Heart right ventricle (tissue), 16 donors: ENCODE measurements at regions of chr15 and their contacts with region 1.

Region 1: DNA sequence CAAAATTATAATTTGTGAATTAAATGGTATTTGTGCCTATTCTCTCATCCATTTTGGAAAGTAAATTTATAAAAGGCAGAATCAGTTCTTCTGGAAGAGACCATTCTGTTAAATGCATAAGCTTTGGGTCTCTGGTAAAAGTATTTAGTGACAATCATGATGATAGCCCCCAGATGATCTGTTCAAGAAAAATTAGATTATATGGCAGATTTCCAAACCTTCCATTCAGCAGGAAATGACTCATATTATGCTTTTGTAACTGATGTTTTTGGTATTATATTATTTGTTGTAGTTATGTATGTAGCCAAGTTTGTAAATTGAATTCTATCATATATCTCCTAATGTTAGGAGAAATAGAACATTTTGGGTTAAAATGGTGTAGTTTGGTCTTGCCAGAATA is 340.8 kb upstream of the DPH6 start:
- DNase-seq: no peak
- ATAC-seq: no peak
- H3K4me3 ChIP-seq: no peak overlapping the region
- H3K27ac ChIP-seq: no peak overlapping the region
- H3K4me1 ChIP-seq: no peaks in the 10 kb centered on the region
- H3K27me3 ChIP-seq: no peaks in the 10 kb centered on the region
- CTCF ChIP-seq: no peak

Region 2: GRCh38 chr15:35944945-35945585 is 58.3 kb after region 1 on chr15:
- intact Hi-C with region 1: loop called in 2 of 10 experiments (anchors 10 kb)
- DNase-seq: no peak
- ATAC-seq: no peak
- H3K4me3 ChIP-seq: no peak overlapping the region
- H3K27ac ChIP-seq: no peak overlapping the region
- H3K4me1 ChIP-seq: no peaks in the 10 kb centered on the region
- H3K27me3 ChIP-seq: no peaks in the 10 kb centered on the region
- CTCF ChIP-seq: no peak

Region 3: GRCh38 chr15:35958021-35958420 is 71.3 kb after region 1 on chr15:
- intact Hi-C with region 1: loop called in 1 of 10 experiments (anchors 10 kb)
- DNase-seq: no peak
- ATAC-seq: no peak
- H3K4me3 ChIP-seq: no peak overlapping the region
- H3K27ac ChIP-seq: no peak overlapping the region
- H3K4me1 ChIP-seq: no peaks in the 10 kb centered on the region
- H3K27me3 ChIP-seq: no peaks in the 10 kb centered on the region
- CTCF ChIP-seq: no peak

Region 4: DNA sequence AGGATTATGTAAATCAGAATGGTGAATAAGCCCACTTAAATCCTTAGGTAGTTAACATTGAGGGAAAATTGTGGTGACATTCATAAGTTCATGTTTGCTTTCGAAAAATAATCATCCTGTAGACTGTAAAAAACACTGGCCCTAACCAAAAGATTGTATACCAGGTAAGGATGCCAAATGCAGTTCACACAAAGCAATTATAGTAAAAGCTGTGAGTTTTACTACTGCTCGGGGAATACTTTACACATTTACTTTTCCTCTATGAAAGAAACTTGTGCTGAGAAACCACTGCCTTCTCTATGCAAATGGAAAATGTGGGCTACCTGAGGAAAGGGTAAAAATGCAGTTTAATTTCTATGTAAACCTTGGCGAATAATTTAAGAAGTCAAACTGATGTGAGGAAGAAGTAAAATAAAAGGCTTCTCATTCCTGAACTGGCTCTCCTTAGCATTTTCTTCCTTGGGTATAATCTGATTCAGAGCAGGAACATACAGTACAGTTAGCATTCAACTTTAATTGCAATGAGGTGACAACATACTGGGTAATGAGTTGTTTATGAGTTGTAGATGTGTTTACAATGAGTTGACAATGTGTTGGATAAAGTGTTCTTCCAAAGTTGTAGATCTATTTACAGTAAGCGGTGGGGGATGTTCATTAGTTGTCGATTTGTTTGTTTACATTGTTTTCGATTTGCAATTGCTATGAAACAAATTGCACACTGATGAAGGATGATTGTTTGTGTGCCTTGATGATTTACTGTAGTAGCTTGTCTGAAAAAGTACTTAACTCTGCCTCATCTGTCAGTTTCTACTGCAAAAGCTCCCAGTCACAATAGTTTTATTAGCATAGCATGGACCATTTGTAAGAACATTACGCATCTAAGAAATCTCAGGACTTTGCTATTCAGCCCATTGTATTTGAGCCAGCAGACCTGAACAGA is 112.2 kb after region 1 on chr15:
- intact Hi-C with region 1: no loop called
- DNase-seq: no peak
- ATAC-seq: no peak
- H3K4me3 ChIP-seq: no peak overlapping the region
- H3K27ac ChIP-seq: no peak overlapping the region
- H3K4me1 ChIP-seq: no peaks in the 10 kb centered on the region
- H3K27me3 ChIP-seq: no peaks in the 10 kb centered on the region
- CTCF ChIP-seq: no peak

Region 5: GRCh38 chr15:36428102-36428845 is 541.5 kb after region 1 on chr15:
- intact Hi-C with region 1: loop called in 1 of 10 experiments (anchors 10 kb)
- DNase-seq: no peak
- ATAC-seq: peak in 2 of 8 donors; percentile 30 to 74
- H3K4me3 ChIP-seq: no peak overlapping the region
- H3K27ac ChIP-seq: no peak overlapping the region
- H3K4me1 ChIP-seq: peaks cover 0 to 8% (median 0%) of the 10 kb centered on the region in 9 donors
- H3K27me3 ChIP-seq: no peaks in the 10 kb centered on the region
- CTCF ChIP-seq: no peak